Activated CD4-positive, alpha-beta T cell treated with anti-CD3 and anti-CD28 coated beads for 36 hours (primary cell): ENCODE measurements at regions of chr6 and their contacts with region 1.

Region 1: DNA sequence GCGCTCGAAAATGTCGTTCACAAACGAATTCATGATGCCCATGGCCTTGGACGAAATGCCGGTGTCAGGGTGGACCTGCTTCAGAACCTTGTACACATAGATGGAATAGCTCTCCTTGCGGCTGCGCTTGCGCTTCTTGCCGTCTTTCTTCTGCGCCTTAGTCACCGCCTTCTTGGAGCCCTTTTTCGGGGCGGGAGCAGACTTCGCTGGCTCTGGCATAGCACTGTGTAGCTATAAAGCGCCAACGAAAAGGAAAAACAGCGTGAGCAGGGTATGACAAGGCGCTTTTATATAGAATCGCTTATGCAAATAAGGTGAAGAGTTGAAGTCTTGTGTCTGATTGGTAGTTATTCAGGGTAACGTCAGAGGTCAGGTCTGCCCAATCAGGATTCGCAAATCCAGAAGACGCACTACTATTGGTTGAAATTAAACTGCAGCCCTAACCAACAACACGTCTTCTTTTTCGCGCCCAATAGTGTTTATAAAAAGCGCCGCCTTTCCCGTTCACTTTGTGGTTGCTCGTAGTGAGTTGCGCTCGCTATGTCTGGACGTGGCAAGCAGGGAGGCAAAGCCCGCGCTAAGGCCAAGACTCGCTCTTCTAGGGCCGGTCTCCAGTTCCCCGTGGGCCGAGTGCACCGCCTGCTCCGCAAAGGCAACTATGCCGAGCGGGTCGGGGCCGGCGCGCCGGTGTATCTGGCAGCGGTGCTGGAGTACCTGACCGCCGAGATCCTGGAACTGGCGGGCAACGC is 114.8 kb upstream of the PRSS16 start:
- DNase-seq: peak; percentile 93
- ATAC-seq: peak; percentile 80
- H3K4me3 Mint-ChIP-seq: no peak overlapping the region
- H3K27ac Mint-ChIP-seq: no peak overlapping the region
- H3K4me1 Mint-ChIP-seq: peaks cover 21% of the 10 kb centered on the region
- H3K27me3 Mint-ChIP-seq: no peaks in the 10 kb centered on the region

Region 2: GRCh38 chr6:26054857-26055669 is 1077.6 kb before region 1 on chr6:
- CTCF ChIA-PET with region 1: no interaction called
- POLR2A ChIA-PET with region 1: no interaction called
- intact Hi-C with region 1: loop called in 1 of 2 experiments (anchors 2 kb)
- DNase-seq: peak; percentile 91
- ATAC-seq: peak; percentile 70
- H3K4me3 Mint-ChIP-seq: peak overlapping the region; percentile 96
- H3K27ac Mint-ChIP-seq: peak overlapping the region; percentile 99
- H3K4me1 Mint-ChIP-seq: peaks cover 13% of the 10 kb centered on the region
- H3K27me3 Mint-ChIP-seq: no peaks in the 10 kb centered on the region

Region 3: DNA sequence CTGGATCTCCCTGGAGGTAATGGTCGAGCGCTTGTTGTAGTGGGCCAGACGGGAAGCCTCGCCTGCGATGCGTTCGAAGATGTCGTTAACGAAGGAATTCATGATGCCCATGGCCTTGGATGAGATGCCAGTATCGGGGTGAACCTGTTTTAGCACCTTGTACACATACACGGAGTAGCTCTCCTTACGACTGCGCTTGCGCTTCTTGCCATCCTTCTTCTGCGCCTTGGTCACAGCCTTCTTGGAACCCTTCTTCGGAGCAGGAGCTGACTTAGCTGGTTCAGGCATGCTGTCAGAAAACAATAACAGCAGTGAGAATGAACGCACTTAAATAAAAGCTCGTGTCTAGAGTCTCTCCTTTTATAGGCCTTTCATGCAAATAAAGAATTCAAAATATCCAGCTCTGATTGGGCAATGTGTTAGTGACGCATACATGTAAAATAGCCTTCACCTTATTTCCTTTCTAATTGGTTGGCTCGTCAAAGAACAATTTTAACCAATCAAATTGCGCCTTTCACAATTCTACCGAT is 916.3 kb before region 1 on chr6:
- CTCF ChIA-PET with region 1: no interaction called
- POLR2A ChIA-PET with region 1: interaction called, 14 read pairs
- intact Hi-C with region 1: loop called in 1 of 2 experiments (anchors 1 kb)
- DNase-seq: peak; percentile 88
- ATAC-seq: peak; percentile 76
- H3K4me3 Mint-ChIP-seq: no peak overlapping the region
- H3K27ac Mint-ChIP-seq: no peak overlapping the region
- H3K4me1 Mint-ChIP-seq: peaks cover 2% of the 10 kb centered on the region
- H3K27me3 Mint-ChIP-seq: no peaks in the 10 kb centered on the region

Region 4: DNA sequence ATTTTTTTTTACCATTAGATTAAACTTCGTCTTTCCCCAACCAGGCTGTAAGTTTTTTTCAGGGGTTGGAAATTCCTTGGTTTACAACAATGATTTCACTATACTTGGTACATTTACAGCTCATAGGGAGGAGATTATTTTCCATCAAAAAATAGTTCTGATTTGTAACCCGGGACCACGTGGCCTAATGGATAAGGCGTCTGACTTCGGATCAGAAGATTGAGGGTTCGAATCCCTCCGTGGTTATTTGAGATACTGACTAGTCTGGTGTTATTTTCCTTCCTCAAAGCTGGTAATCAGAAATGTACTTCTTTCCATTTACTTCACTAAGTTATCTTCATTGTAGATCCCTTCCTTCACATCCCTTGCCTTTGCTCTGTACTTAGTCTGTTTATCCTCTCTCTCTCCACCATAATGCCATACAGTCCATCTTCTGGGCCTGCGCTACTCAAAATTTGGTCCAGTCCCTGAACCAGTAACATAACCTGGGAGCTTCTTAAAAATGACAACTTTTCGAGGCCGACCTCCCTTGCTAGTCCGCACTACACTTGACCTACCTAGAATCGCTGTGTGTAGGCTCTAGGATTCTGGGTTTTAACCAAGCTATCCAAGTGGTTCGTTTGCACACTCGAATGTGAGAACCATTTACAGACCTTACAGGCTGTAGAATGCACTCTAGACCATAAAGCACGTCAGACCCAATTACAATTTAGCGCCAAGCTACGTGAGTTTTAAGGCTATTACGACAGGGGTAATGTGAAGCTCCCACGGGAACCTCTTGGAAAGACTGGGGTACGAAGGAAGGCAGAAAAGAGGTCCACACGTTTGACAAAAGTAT is 809.8 kb before region 1 on chr6:
- CTCF ChIA-PET with region 1: no interaction called
- POLR2A ChIA-PET with region 1: interaction called, 3 read pairs
- intact Hi-C with region 1: loop called in 1 of 2 experiments (anchors 5 kb)
- DNase-seq: peak; percentile 77
- ATAC-seq: peak; percentile 66
- H3K4me3 Mint-ChIP-seq: peak overlapping the region; percentile 84
- H3K27ac Mint-ChIP-seq: peak overlapping the region; percentile 93
- H3K4me1 Mint-ChIP-seq: peaks cover 28% of the 10 kb centered on the region
- H3K27me3 Mint-ChIP-seq: peaks cover 5% of the 10 kb centered on the region

Region 5: GRCh38 chr6:27078734-27079357 is 53.9 kb before region 1 on chr6:
- CTCF ChIA-PET with region 1: no interaction called
- POLR2A ChIA-PET with region 1: no interaction called
- intact Hi-C with region 1: no loop called
- DNase-seq: peak; percentile 48
- ATAC-seq: peak; percentile 85
- H3K4me3 Mint-ChIP-seq: peak overlapping the region; percentile 42
- H3K27ac Mint-ChIP-seq: no peak overlapping the region
- H3K4me1 Mint-ChIP-seq: no peaks in the 10 kb centered on the region
- H3K27me3 Mint-ChIP-seq: peaks cover 52% of the 10 kb centered on the region

Region 6: DNA sequence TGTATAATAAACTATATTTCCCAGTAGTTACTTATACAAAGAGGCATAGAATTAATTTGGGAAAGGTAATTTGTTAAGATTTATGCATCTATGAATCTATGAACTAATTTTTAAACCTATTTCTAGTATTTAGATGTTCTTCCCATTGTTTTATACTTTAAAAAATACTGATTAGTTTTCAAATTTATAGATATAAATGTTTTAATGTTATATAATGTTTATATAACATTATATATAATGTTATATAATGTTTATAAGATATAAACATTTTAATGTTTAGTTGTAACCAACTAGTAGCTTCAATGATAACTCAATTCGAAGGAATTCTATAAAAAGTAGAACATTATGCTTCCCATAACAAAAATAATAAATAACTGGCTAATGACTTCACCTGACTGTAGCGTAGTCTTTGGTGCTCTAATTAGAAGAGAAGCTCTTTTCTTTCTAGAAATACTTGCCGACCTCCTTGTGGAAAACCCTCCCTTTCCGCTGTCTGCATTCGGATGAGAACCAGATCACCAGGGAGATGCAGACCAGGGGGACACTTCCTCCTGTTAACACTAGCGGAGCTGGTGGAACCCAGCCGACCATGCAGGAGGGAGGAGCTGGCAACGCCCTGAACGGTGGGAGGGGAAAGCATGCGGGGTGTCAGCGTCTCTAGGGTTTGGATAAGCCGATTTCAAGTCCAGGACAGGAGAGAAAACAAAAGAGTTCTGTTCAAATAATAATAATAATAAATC is 621.1 kb after region 1 on chr6:
- CTCF ChIA-PET with region 1: no interaction called
- POLR2A ChIA-PET with region 1: no interaction called
- intact Hi-C with region 1: loop called (anchors 1 to 2 kb)
- DNase-seq: peak; percentile 89
- ATAC-seq: peak; percentile 70
- H3K4me3 Mint-ChIP-seq: peak overlapping the region; percentile 98
- H3K27ac Mint-ChIP-seq: peak overlapping the region; percentile 81
- H3K4me1 Mint-ChIP-seq: peaks cover 31% of the 10 kb centered on the region
- H3K27me3 Mint-ChIP-seq: peaks cover 3% of the 10 kb centered on the region

Region 7: GRCh38 chr6:27893059-27893835 is 760.5 kb after region 1 on chr6:
- CTCF ChIA-PET with region 1: no interaction called
- POLR2A ChIA-PET with region 1: interaction called, 50 read pairs
- intact Hi-C with region 1: loop called (anchors 1 to 5 kb)
- DNase-seq: peak; percentile 94
- ATAC-seq: peak; percentile 64
- H3K4me3 Mint-ChIP-seq: no peak overlapping the region
- H3K27ac Mint-ChIP-seq: no peak overlapping the region
- H3K4me1 Mint-ChIP-seq: peaks cover 31% of the 10 kb centered on the region
- H3K27me3 Mint-ChIP-seq: no peaks in the 10 kb centered on the region